CD4-positive, alpha-beta memory T cell (primary cell): ENCODE measurements at regions of chr6 and their contacts with region 1.

Region 1: GRCh38 chr6:159693128-159693893 is at the start of gene SOD2:
- DNase-seq: peak; percentile 85 to 90 (median 86)
- H3K4me3 ChIP-seq: peak within 1 kb of the TSS; percentile 87 to 88
- H3K4me3 Mint-ChIP-seq: peak within 1 kb of the TSS; percentile 93 to 100 (median 96)
- H3K27ac ChIP-seq: peak within 1 kb of the TSS; percentile 64
- H3K27ac Mint-ChIP-seq: peak within 1 kb of the TSS; percentile 96 to 99 (median 98)
- H3K4me1 ChIP-seq: peaks cover 50% of the 10 kb centered on the region
- H3K4me1 Mint-ChIP-seq: peaks cover 31 to 70% (median 47%) of the 10 kb centered on the region in 4 donors
- H3K27me3 ChIP-seq: no peaks in the 10 kb centered on the region
- H3K27me3 Mint-ChIP-seq: no peaks in the 10 kb centered on the region
- total RNA-seq, gene SOD2: 128 to 131 TPM

Region 2: GRCh38 chr6:159720708-159721107 is 27.4 kb after region 1 on chr6:
- CTCF ChIA-PET with region 1: interaction called, 38 read pairs
- POLR2A ChIA-PET with region 1: interaction called, 240 read pairs
- intact Hi-C with region 1: loop called (anchors 1 kb)
- DNase-seq: peak; percentile 62 to 72 (median 65)
- H3K4me3 ChIP-seq: no peak overlapping the region
- H3K4me3 Mint-ChIP-seq: no peak overlapping the region
- H3K27ac ChIP-seq: no peak overlapping the region
- H3K27ac Mint-ChIP-seq: peak overlapping the region in 1 of 7 donors; percentile 35
- H3K4me1 ChIP-seq: peaks cover 21% of the 10 kb centered on the region
- H3K4me1 Mint-ChIP-seq: peaks cover 4 to 19% (median 16%) of the 10 kb centered on the region in 4 donors
- H3K27me3 ChIP-seq: no peaks in the 10 kb centered on the region
- H3K27me3 Mint-ChIP-seq: no peaks in the 10 kb centered on the region

Region 3: DNA sequence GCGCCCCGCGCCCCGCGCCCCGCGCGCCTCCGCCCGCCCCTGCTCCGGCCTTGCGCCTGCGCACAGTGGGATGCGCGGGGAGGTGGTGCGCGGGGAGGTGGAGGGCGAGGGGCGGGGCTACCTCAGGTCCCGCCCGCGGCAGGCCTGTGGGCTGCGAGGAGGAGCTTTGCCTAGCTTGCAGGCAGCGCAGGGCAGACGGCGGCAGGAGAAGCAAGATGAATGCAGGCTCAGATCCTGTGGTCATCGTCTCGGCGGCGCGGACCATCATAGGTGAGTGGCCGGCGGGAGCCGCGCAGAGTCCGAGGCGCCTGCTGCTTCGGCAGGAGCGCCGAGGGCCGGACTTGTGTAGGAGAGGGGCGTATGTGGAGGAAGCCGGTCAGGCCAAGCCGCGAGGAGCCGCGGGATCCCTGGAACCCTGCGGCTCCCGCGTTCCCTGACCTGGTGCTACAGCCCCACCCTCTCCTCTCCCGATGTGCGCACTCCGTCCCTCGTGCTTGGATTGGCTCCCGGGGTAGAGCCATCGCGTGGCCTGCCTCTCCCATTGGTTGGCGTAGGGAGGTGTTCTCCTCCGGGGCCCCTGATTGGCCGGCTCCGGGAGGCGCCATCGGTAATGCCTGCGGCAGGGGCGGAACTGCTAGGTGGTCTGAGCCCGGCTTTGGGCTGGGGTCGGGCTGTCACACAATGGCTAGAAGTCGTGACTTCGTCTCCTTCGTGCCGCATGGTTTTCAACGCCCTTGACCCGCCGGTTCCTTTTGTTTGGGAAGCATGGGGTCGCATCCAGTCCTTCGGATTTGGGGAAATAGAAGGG is 68.8 kb after region 1 on chr6 and contains the start of gene ACAT2:
- CTCF ChIA-PET with region 1: interaction called, 10 read pairs
- POLR2A ChIA-PET with region 1: interaction called, 45 read pairs
- intact Hi-C with region 1: loop called (anchors 1 kb)
- DNase-seq: peak; percentile 90 to 93 (median 93)
- H3K4me3 ChIP-seq: peak within 1 kb of the TSS; percentile 87 to 99
- H3K4me3 Mint-ChIP-seq: peak within 1 kb of the TSS; percentile 94 to 99 (median 96)
- H3K27ac ChIP-seq: peak within 1 kb of the TSS; percentile 94
- H3K27ac Mint-ChIP-seq: peak within 1 kb of the TSS; percentile 93 to 98 (median 98)
- H3K4me1 ChIP-seq: peaks cover 16% of the 10 kb centered on the region
- H3K4me1 Mint-ChIP-seq: peaks cover 23 to 33% (median 28%) of the 10 kb centered on the region in 4 donors
- H3K27me3 ChIP-seq: no peaks in the 10 kb centered on the region
- H3K27me3 Mint-ChIP-seq: no peaks in the 10 kb centered on the region
- total RNA-seq, gene ACAT2: 30.5 to 30.9 TPM

Region 4: DNA sequence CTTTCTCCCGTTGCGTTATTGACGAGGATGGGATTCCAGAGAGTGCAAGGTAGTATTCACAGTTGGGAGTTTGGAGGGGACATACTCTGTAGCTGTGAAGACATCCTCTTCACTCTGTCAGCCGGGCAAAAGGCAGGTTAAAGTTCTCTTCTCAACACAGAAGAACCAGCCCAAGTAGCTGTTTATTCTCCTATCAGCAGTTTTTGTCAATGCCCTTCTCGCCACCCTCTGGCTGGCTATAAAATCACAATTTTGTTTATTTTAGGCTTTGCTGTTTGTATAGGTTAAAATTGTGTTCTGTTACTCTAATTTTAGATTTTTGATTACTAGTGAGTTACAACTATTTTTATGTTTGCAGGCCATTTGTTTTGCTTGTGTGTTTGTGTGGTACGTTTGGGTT is 159.6 kb after region 1 on chr6:
- CTCF ChIA-PET with region 1: interaction called, 50 read pairs
- POLR2A ChIA-PET with region 1: interaction called, 4 read pairs
- intact Hi-C with region 1: loop called (anchors 1 kb)
- DNase-seq: peak in 4 of 5 donors; percentile 19 to 38 (median 30)
- H3K4me3 ChIP-seq: no peak overlapping the region
- H3K4me3 Mint-ChIP-seq: no peak overlapping the region
- H3K27ac ChIP-seq: no peak overlapping the region
- H3K27ac Mint-ChIP-seq: no peak overlapping the region
- H3K4me1 ChIP-seq: no peaks in the 10 kb centered on the region
- H3K4me1 Mint-ChIP-seq: no peaks in the 10 kb centered on the region
- H3K27me3 ChIP-seq: no peaks in the 10 kb centered on the region
- H3K27me3 Mint-ChIP-seq: peaks cover 0 to 1% of the 10 kb centered on the region in 2 donors

Region 5: GRCh38 chr6:159968440-159969203 is 275.3 kb after region 1 on chr6 and contains the start of gene IGF2R:
- CTCF ChIA-PET with region 1: no interaction called
- POLR2A ChIA-PET with region 1: interaction called, 5 read pairs
- intact Hi-C with region 1: loop called (anchors 1 kb)
- DNase-seq: peak; percentile 91 to 94 (median 92)
- H3K4me3 ChIP-seq: peak within 1 kb of the TSS; percentile 61 to 62
- H3K4me3 Mint-ChIP-seq: peak within 1 kb of the TSS; percentile 88 to 96 (median 94)
- H3K27ac ChIP-seq: peak within 1 kb of the TSS; percentile 75
- H3K27ac Mint-ChIP-seq: peak within 1 kb of the TSS; percentile 92 to 97 (median 94)
- H3K4me1 ChIP-seq: peaks cover 44% of the 10 kb centered on the region
- H3K4me1 Mint-ChIP-seq: peaks cover 29 to 45% (median 38%) of the 10 kb centered on the region in 4 donors
- H3K27me3 ChIP-seq: no peaks in the 10 kb centered on the region
- H3K27me3 Mint-ChIP-seq: no peaks in the 10 kb centered on the region
- total RNA-seq, gene IGF2R: 77.5 to 79.2 TPM

Region 6: GRCh38 chr6:160102956-160103824 is 409.9 kb after region 1 on chr6:
- CTCF ChIA-PET with region 1: no interaction called
- POLR2A ChIA-PET with region 1: no interaction called
- intact Hi-C with region 1: loop called (anchors 5 kb)
- DNase-seq: peak in 3 of 5 donors; percentile 7 to 17 (median 8)
- H3K4me3 ChIP-seq: no peak overlapping the region
- H3K4me3 Mint-ChIP-seq: no peak overlapping the region
- H3K27ac ChIP-seq: no peak overlapping the region
- H3K27ac Mint-ChIP-seq: peak overlapping the region in 2 of 7 donors; percentile 35 to 43
- H3K4me1 ChIP-seq: no peaks in the 10 kb centered on the region
- H3K4me1 Mint-ChIP-seq: peaks cover 4 to 21% (median 13%) of the 10 kb centered on the region in 4 donors
- H3K27me3 ChIP-seq: no peaks in the 10 kb centered on the region
- H3K27me3 Mint-ChIP-seq: no peaks in the 10 kb centered on the region

Region 7: DNA sequence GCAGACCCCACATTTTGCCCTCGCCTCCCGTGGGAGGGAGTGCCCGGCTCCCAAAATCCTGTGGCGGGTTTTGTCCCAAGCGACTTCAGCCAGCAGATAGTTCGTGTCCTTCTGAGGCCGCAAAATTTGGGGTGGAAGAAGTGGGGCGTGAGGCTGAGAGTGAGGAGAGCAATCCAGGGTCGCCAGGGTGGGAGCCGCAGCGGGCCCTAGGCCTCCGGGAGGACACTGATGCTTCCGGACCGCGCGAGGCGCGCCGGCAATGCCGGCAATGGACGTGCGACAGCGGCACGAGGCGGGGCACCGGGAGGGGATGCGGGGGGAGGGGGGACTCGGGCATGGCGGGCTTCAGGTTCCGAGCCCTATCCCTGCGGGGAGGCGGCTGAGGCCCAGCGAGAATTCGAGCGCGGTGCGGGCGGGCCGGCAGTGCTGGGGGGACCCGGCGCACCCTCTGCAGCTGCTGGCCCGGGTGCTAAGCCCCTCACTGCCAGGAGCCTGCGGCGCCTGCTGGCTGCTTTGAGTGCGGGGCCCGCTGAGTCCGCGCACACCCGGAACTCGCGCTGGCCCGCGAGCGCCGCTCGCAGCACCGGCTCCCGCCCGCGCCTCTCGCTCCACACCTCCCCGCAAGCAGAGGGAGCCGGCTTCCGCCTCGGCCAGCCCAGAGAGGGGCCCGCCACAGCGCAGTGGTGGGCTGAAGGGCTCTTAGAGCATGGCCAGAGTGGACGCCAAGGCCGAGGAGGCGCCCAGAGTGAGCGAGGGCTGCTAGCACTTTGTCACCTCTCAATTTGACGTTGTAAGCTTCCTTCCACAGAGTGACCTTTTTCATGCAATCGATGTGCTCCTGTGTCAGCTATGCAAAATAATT is 827.0 kb after region 1 on chr6:
- CTCF ChIA-PET with region 1: no interaction called
- POLR2A ChIA-PET with region 1: no interaction called
- intact Hi-C with region 1: loop called (anchors 2 kb)
- DNase-seq: peak; percentile 73 to 81 (median 74)
- H3K4me3 ChIP-seq: peak overlapping the region; percentile 79 to 97
- H3K4me3 Mint-ChIP-seq: peak overlapping the region; percentile 88 to 99 (median 96)
- H3K27ac ChIP-seq: peak overlapping the region; percentile 65
- H3K27ac Mint-ChIP-seq: peak overlapping the region; percentile 87 to 98 (median 96)
- H3K4me1 ChIP-seq: peaks cover 27% of the 10 kb centered on the region
- H3K4me1 Mint-ChIP-seq: peaks cover 35 to 56% (median 48%) of the 10 kb centered on the region in 4 donors
- H3K27me3 ChIP-seq: no peaks in the 10 kb centered on the region
- H3K27me3 Mint-ChIP-seq: no peaks in the 10 kb centered on the region